Mammary epithelial cell (primary cell): ENCODE measurements at regions of chr7 and their contacts with region 1.

Region 1: DNA sequence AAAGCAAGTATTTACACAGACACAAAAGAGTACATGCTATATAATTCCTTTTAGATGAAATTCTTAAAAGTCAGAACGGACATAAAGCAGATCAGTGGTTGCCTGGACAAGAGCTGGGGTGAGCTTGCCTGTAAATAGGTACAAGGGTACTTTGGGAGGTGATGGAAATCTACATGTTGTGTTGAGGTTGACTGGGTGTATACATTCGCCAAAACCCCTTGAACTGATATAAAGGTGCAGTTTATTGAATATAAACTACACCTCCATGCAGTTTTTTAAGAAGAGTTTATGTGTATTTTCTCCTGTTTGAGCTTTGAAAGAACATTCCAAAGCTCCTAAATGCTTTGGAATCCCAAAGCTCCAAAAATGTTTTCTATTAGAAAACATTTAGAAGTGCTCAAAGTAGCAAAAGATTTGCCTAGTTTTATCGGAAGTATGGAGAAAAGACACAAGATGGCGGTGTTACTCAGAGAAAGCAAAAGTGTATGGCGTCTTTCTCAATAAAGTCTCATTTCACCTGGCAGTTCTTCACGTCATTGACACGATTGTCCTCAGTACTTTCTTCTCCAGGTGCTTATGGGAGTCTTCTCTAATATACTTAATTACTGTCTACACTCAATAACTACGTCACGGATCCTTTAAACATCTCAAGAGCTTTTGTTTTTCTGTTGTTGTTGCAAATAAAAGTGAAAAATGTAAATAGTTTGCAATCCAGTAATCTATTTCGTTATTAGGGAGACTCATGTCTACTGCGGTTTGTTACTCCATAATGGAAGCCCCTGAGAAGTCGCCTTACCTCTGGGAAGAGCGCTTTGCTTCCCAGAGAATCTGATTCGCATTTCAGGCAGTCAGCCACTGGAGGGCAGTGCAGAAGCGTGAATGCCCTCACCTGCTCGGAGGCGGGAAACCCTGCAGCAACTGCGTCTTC is 14.7 kb upstream of the SEC61G start:
- DNase-seq: peak; percentile 78
- H3K4me3 ChIP-seq: peak overlapping the region; percentile 9 to 33 (median 14)
- H3K27ac ChIP-seq: peak overlapping the region; percentile 50
- H3K4me1 ChIP-seq: peaks cover 16% of the 10 kb centered on the region
- H3K27me3 ChIP-seq: no peaks in the 10 kb centered on the region
- CTCF ChIP-seq: peak; percentile 90 to 94

Region 2: GRCh38 chr7:54823776-54824175 is 50.0 kb after region 1 on chr7:
- CTCF ChIA-PET with region 1: no interaction called
- dilution Hi-C with region 1: no loop called
- in situ Hi-C with region 1: no loop called
- intact Hi-C with region 1: no loop called
- DNase-seq: no peak
- H3K4me3 ChIP-seq: no peak overlapping the region
- H3K27ac ChIP-seq: no peak overlapping the region
- H3K4me1 ChIP-seq: peaks cover 7% of the 10 kb centered on the region
- H3K27me3 ChIP-seq: no peaks in the 10 kb centered on the region
- CTCF ChIP-seq: no peak

Region 3: DNA sequence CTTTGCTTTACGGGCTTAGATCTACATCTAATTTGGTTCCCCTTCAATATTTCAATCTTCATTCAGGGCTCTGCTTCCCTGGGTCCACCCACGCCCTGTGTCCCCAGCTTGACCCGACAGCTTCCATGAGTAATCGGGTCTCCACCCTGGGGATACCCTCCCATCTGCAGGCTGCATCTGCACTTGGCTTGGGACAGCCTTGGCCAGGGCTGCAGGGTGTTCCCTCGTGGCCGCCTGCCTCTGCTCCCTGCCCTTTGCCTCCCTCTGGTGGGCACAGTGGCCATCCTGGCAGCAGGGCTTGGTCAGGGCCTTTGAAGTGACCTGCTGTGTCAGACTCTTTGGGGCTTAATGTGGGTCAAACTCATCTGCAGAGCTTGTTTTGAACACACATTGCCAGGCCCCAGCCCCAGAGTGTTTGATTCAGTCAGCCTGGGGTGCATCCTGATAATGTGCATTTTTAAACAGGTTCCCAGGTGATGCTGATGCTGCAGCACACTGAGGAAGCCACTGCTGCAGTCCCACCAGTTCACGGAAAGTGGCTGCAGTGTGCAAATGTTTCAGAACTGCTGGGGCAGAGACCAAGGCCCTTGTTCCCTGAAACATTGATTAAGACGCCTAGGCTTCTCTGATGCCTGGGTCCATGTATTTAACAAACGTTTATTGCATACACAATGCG is 65.9 kb after region 1 on chr7:
- CTCF ChIA-PET with region 1: no interaction called
- dilution Hi-C with region 1: no loop called
- in situ Hi-C with region 1: no loop called
- intact Hi-C with region 1: loop called (anchors 1 kb)
- DNase-seq: peak; percentile 73
- H3K4me3 ChIP-seq: no peak overlapping the region
- H3K27ac ChIP-seq: no peak overlapping the region
- H3K4me1 ChIP-seq: peaks cover 17% of the 10 kb centered on the region
- H3K27me3 ChIP-seq: no peaks in the 10 kb centered on the region
- CTCF ChIP-seq: peak; percentile 82 to 89

Region 4: DNA sequence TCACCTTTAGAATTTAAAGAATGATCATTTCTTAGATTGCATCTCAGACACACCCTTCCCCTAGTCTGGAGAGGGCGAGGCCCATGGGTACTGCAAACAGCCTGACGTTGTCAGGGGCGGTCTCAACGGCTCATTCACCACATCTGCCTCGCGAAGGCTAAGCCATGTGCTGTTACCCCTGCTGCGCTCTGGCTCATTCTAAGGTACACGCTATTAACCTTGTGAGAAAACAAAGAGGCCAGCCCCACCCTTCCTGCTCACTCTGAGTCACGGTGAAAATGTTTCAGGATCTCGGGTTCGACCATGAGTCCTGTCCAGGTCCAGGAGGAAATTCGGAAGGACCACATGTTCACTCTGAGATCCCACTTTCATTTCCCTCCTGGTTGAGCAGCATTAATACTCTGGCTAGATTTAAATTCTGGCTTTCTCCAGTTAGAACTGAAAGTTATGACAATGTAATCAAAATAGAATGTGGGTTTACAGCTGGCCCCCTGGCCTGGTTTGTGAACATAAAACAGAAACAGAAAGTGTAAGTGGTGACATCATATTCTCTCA is 300.3 kb after region 1 on chr7:
- CTCF ChIA-PET with region 1: no interaction called
- dilution Hi-C with region 1: no loop called
- in situ Hi-C with region 1: no loop called
- intact Hi-C with region 1: loop called (anchors 1 kb)
- DNase-seq: peak; percentile 89
- H3K4me3 ChIP-seq: peak overlapping the region in 1 of 3 experiments; percentile 10
- H3K27ac ChIP-seq: peak overlapping the region; percentile 97
- H3K4me1 ChIP-seq: peaks cover 58% of the 10 kb centered on the region
- H3K27me3 ChIP-seq: no peaks in the 10 kb centered on the region
- CTCF ChIP-seq: no peak

Region 5: DNA sequence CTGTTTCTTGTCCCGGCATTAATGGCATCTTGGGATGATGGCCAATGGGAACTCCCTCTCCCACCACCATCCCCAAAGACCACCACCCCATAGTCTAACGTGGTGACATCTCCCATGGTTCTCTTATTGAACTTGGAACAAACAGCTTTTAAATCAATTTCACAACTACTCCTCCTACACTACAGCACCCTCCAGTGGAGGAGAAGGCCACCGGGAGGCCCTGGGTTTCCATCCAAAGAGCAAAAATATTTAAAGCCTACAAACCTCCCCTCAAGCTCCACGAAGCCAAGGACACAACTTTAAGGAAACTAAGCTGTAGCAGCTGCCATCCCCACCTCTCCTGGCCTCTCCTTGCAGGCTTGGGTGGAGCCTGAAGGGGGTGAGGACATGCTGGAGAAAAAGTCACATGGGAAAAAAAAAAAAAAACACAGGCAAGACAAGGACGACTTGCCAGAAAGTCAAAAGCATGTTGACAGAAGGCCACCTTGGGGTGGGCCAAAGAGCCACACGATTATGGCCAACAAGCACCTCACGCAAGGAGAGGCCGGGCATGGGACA is 497.4 kb after region 1 on chr7:
- CTCF ChIA-PET with region 1: interaction called, 3 read pairs
- dilution Hi-C with region 1: loop called (anchors 25 kb)
- in situ Hi-C with region 1: no loop called
- intact Hi-C with region 1: loop called (anchors 1 kb)
- DNase-seq: no peak
- H3K4me3 ChIP-seq: no peak overlapping the region
- H3K27ac ChIP-seq: no peak overlapping the region
- H3K4me1 ChIP-seq: no peaks in the 10 kb centered on the region
- H3K27me3 ChIP-seq: no peaks in the 10 kb centered on the region
- CTCF ChIP-seq: peak; percentile 12 to 43